MCF 10A (cell line): ENCODE measurements at regions of chr7 and their contacts with region 1.

Region 1: GRCh38 chr7:158407581-158408317 is 179.9 kb downstream of the PTPRN2 start:
- DNase-seq: peak; percentile 78
- H3K4me3 Mint-ChIP-seq: no peak overlapping the region
- H3K27ac Mint-ChIP-seq: no peak overlapping the region
- H3K4me1 Mint-ChIP-seq: peaks cover 16% of the 10 kb centered on the region
- H3K27me3 Mint-ChIP-seq: no peaks in the 10 kb centered on the region
- CTCF ChIP-seq: peak; percentile 56

Region 2: DNA sequence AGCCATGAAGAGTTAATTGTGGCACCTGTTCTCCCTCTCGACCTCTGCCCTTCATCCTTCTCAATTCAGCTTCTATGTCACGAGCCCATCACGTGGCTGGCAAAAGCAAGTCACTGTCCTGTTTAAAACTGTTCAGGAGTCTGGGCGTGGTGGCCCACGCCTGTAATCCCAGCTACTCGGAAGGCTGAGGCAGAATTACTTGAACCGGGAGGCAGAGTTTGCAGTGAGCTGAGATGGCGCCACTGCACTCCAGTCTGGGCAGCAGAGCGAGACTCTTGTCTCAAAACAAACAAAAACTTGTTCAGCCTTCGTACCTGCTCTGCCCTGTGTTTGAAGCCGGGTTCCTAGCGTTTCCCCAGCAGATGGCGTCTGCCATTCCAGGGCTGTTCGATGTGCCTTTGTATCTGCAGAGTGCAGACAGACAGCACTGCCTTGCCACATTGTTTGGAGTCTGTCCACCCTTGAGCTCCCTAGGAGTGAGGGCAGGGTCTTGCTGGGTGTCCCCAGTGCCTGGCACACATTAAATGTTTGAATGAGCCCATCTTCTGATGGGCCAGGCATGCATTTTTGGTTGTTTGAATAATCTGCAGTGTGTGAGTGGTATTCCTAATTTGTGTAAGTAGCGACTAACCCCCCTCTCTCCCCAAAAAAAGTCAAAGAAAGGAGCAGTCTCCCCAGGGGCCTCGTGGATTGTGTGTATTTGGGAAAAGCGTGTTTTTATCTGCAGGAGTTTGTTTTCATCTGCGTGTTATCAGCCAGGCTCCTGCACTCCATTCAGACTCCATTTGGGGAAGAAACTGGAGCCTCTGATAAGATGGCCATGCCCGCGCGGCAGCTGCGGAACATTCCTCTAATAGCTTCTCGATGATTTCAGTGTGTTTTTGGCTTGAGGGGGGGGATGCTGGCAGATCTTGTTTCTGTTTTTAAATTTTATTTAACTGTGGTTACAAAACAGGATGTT is 1009.7 kb before region 1 on chr7:
- CTCF ChIA-PET with region 1: interaction called, 3 read pairs
- POLR2A ChIA-PET with region 1: no interaction called
- intact Hi-C with region 1: loop called (anchors 5 kb)
- DNase-seq: peak; percentile 52
- H3K4me3 Mint-ChIP-seq: no peak overlapping the region
- H3K27ac Mint-ChIP-seq: peak overlapping the region; percentile 40
- H3K4me1 Mint-ChIP-seq: peaks cover 18% of the 10 kb centered on the region
- H3K27me3 Mint-ChIP-seq: no peaks in the 10 kb centered on the region
- CTCF ChIP-seq: peak; percentile 32

Region 3: GRCh38 chr7:157432957-157433576 is 974.7 kb before region 1 on chr7:
- CTCF ChIA-PET with region 1: interaction called, 8 read pairs
- POLR2A ChIA-PET with region 1: no interaction called
- intact Hi-C with region 1: loop called (anchors 10 kb)
- DNase-seq: peak; percentile 41
- H3K4me3 Mint-ChIP-seq: peak overlapping the region; percentile 50
- H3K27ac Mint-ChIP-seq: no peak overlapping the region
- H3K4me1 Mint-ChIP-seq: peaks cover 11% of the 10 kb centered on the region
- H3K27me3 Mint-ChIP-seq: no peaks in the 10 kb centered on the region
- CTCF ChIP-seq: peak; percentile 55

Region 4: DNA sequence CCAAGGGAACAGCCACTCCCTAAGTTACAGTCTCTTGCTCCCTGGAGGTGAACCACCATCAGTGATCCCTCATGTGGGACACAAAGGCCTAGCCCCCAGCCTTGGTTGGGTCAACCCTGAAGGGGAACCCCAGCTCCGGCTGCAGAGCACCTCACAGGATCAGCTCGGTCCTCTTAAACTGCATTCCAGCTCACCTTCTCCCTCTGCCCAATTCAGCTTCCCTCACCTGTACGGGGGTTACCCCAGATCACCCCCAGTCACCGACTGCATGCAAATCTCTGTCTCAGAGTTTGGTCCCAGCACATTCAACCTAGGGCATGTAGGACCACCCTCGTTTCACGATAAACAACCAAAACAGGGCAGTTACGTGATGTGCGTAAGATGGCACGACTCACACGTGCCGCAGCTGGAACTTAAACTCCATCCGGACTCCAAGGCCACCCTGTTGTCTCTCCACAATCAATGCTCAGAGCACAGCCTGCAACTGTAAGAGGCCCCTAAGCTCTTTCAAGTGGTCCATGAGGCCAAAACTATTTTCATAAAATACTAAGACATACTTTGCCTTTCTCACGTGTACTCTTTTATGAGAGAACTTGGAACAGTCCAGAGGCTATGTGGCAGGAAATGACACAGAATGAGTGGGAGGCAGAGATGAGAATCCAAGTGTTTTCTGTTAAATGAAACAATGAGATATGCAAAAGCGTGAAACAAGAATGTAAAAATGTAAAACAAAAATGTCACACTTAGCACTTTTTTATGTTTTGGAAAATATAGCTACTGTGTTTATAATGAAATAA is 105.3 kb before region 1 on chr7:
- CTCF ChIA-PET with region 1: no interaction called
- POLR2A ChIA-PET with region 1: no interaction called
- intact Hi-C with region 1: no loop called
- DNase-seq: peak; percentile 16
- H3K4me3 Mint-ChIP-seq: no peak overlapping the region
- H3K27ac Mint-ChIP-seq: no peak overlapping the region
- H3K4me1 Mint-ChIP-seq: peaks cover 4% of the 10 kb centered on the region
- H3K27me3 Mint-ChIP-seq: no peaks in the 10 kb centered on the region
- CTCF ChIP-seq: no peak

Region 5: GRCh38 chr7:158353606-158354570 is 53.9 kb before region 1 on chr7:
- CTCF ChIA-PET with region 1: interaction called, 30 read pairs
- POLR2A ChIA-PET with region 1: no interaction called
- intact Hi-C with region 1: loop called (anchors 1 kb)
- DNase-seq: peak; percentile 56
- H3K4me3 Mint-ChIP-seq: no peak overlapping the region
- H3K27ac Mint-ChIP-seq: no peak overlapping the region
- H3K4me1 Mint-ChIP-seq: no peaks in the 10 kb centered on the region
- H3K27me3 Mint-ChIP-seq: peaks cover 16% of the 10 kb centered on the region
- CTCF ChIP-seq: peak; percentile 67

Region 6: GRCh38 chr7:158374586-158374985 is 33.2 kb before region 1 on chr7:
- CTCF ChIA-PET with region 1: interaction called, 5 read pairs
- POLR2A ChIA-PET with region 1: interaction called, 22 read pairs
- intact Hi-C with region 1: no loop called
- DNase-seq: peak; percentile 94
- H3K4me3 Mint-ChIP-seq: peak overlapping the region; percentile 64
- H3K27ac Mint-ChIP-seq: peak overlapping the region; percentile 95
- H3K4me1 Mint-ChIP-seq: peaks cover 34% of the 10 kb centered on the region
- H3K27me3 Mint-ChIP-seq: peaks cover 16% of the 10 kb centered on the region
- CTCF ChIP-seq: no peak

Region 7: DNA sequence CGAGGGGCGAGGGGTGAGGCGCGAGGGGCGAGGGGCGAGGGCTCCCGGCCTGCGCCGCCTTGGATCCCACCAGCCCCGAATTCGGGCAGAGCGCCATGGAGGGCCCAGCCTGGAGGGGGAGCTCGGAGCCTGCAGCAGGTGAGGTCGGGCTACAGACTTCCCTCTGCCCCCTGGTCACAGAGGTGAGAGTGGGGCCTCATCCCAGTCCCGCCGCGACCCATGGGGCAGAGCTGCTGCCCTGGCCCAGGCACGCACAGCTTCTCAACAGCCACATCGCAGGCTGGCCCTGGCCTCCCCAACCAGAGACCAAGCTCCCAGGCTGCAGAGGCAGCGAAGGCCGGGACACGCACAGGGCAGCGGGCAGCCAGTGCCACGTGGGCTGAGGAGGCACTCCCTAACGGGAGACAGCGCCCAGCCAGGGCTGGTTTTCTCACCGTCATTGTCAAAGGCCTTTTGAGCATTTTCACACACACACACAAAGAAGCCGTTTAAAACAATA is 11.9 kb before region 1 on chr7:
- CTCF ChIA-PET with region 1: interaction called, 12 read pairs
- POLR2A ChIA-PET with region 1: no interaction called
- intact Hi-C with region 1: no loop called
- DNase-seq: peak; percentile 47
- H3K4me3 Mint-ChIP-seq: no peak overlapping the region
- H3K27ac Mint-ChIP-seq: peak overlapping the region; percentile 64
- H3K4me1 Mint-ChIP-seq: peaks cover 16% of the 10 kb centered on the region
- H3K27me3 Mint-ChIP-seq: peaks cover 6% of the 10 kb centered on the region
- CTCF ChIP-seq: no peak

Region 8: GRCh38 chr7:158431941-158432347 is 24.2 kb after region 1 on chr7:
- CTCF ChIA-PET with region 1: interaction called, 6 read pairs
- POLR2A ChIA-PET with region 1: interaction called, 12 read pairs
- intact Hi-C with region 1: no loop called
- DNase-seq: peak; percentile 100
- H3K4me3 Mint-ChIP-seq: peak overlapping the region; percentile 75
- H3K27ac Mint-ChIP-seq: peak overlapping the region; percentile 99
- H3K4me1 Mint-ChIP-seq: peaks cover 44% of the 10 kb centered on the region
- H3K27me3 Mint-ChIP-seq: no peaks in the 10 kb centered on the region
- CTCF ChIP-seq: no peak